AG04449 (cell line): ENCODE measurements at regions of chr20 and their contacts with region 1.

Region 1: GRCh38 chr20:37282556-37282955 is 6.9 kb upstream of the MANBAL start:
- DNase-seq: no peak
- H3K4me3 ChIP-seq: no peak overlapping the region
- CTCF ChIP-seq: peak; percentile 57

Region 2: DNA sequence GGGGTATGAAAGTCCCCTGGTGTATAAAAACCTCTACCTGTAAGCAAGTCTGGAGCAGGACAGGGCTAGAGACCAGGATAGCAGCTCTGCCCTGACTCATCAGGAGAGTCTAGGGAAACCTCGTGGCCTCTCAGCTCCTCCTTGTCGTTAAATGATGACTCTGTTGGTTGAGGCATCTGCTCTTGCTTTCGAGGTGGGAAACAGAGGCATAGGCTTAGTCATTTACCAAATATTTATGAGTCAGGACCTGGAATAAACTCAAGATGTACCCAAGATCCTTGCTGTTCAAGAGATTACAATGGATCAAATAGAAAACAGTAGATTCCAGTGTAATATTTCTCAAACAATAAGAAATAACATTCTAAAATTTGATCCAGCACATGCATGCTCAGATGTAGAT is 12.4 kb after region 1 on chr20:
- CTCF ChIA-PET with region 1: interaction called, 11 read pairs
- POLR2A ChIA-PET with region 1: no interaction called
- DNase-seq: peak; percentile 90
- H3K4me3 ChIP-seq: no peak overlapping the region
- CTCF ChIP-seq: no peak

Region 3: DNA sequence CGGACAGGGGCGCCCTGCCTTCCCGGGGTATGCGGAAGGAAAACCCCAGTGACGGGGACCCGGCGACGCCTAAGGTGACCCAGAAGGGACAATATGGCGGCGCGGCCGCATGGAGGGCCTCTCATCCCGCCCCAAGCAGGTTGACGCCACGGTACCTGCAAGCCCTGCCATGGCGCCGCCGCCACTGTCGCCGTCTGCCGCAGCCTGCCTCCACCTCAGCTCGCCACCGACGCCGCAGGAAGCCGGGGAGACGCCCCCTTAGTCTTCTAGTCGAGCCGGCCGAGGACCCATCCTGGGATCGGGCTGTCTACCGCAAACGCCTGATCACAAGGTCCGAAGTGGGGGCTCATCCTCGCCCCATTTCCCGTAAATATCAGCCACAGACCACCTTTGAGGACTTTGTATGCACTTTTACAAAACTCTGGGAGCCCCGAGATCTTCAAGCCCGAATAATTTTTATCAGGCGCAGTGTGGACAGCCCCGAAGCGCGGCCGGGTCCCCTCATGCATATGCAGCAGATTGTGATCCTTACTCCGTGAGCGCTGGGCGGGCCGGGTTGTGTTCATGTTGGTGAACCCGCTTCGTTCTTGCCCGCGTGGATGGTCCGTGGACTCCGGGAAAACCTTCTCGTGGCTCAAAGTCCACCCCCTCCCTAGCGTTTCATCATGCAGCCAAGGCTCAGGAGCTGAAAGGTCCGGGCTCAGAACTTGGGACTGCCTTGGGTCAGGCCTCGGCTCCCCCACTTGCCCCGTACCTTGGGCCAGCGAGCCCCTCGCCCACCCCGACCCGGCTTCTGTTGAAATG is 245.3 kb after region 1 on chr20 and contains the start of gene BLCAP:
- CTCF ChIA-PET with region 1: interaction called, 61 read pairs
- POLR2A ChIA-PET with region 1: no interaction called
- DNase-seq: no peak
- H3K4me3 ChIP-seq: peak within 1 kb of the TSS; percentile 96
- CTCF ChIP-seq: no peak